AG04449 (cell line): ENCODE measurements at regions of chr12 and their contacts with region 1.

Region 1: DNA sequence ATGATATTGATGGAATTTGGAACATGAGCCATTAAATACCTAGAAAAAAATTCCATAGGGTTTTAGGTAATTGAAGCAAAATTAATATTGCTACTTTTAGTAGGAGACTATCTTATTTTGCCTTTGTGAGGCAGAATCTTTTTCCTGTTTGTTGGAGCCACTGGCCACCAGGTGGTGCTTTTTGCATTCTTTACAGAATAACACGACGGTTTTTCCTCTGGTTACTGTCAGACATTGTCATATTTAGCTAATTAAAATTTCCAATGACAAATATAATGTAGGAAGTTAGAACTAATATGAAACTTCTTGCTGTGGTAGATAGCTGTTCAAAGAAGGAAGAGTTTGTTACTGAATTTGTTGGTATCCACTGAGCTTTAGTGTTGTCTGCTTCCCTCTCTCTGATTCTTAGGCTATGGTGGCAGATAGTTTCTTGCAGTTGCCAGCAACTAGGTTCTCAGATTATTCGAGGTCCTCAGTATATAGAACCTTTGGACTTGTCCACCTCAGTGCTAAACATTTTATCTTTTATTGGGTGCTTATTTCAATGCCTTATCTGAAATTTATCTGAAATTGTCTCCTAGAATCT is 25.7 kb downstream of the RAB21 start:
- DNase-seq: no peak
- H3K4me3 ChIP-seq: no peak overlapping the region
- CTCF ChIP-seq: peak; percentile 41

Region 2: GRCh38 chr12:71766202-71766601 is 14.1 kb before region 1 on chr12:
- CTCF ChIA-PET with region 1: interaction called, 19 read pairs
- POLR2A ChIA-PET with region 1: interaction called, 3 read pairs
- DNase-seq: no peak
- H3K4me3 ChIP-seq: no peak overlapping the region
- CTCF ChIP-seq: no peak

Region 3: DNA sequence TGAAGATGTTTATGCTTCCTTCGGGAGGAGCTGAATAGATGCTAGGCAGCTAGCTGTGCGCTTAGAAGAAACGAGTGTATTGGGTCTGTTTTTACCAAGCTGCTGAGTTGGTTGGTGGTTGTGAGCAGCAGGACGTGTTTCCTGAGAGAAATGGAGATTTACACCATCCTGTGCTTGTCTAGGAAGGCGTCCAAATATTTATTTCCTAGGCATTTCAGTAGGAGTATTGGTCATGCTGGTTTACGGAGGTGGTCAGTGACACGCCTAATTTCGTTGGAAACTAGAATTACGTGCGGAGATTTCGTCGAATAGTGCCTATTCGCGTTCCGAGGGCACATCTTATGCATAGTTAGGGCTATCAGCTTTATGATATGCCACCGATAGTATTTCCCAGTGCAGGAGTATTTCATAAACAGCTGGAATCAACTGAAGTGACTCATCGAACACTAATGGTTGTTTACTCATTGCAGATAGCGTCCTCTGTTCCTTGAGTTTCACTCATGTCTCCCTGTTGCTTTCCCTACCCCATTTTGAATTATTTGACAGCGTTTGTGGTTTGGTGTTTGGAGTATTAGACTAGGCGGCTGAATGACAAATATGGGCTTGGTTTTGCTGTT is 60.0 kb after region 1 on chr12:
- CTCF ChIA-PET with region 1: interaction called, 43 read pairs
- POLR2A ChIA-PET with region 1: no interaction called
- DNase-seq: peak; percentile 7
- H3K4me3 ChIP-seq: peak overlapping the region; percentile 89
- CTCF ChIP-seq: no peak

Region 4: GRCh38 chr12:71900091-71900490 is 119.8 kb after region 1 on chr12:
- CTCF ChIA-PET with region 1: interaction called, 41 read pairs
- POLR2A ChIA-PET with region 1: no interaction called
- DNase-seq: no peak
- H3K4me3 ChIP-seq: no peak overlapping the region
- CTCF ChIP-seq: peak; percentile 22

Region 5: DNA sequence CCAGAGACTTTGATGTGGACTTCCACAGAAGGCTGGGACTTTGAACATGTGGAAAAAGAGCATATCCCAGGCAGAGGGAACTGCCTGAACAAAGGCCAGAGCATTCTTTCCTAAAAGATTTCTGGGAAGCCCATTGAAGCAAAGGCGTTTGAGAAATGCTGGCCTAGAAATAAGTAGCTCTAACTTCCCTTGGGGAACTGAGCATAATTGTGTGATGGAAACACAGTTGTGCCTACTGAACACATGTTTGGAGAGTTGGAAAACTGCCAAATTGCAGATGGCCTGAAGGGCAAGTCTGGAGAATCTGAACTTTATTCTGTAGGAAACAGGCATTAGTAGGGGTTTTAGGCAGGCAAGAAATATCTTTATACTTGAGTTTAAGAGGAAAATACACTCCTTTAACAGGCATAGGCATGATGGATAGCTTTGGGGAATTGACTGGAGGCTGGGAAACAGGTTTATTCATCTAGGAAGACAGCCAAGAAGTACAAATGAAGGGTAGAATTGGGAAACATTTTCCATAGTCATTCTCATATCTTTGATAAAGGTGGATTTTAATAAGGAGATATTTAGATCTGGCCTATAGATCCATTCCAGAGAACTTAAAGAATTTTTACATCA is 292.4 kb after region 1 on chr12:
- CTCF ChIA-PET with region 1: no interaction called
- POLR2A ChIA-PET with region 1: no interaction called
- DNase-seq: no peak
- H3K4me3 ChIP-seq: no peak overlapping the region
- CTCF ChIP-seq: no peak